GM12878 (cell line): ENCODE measurements at regions of chr5 and their contacts with region 1.

Region 1: DNA sequence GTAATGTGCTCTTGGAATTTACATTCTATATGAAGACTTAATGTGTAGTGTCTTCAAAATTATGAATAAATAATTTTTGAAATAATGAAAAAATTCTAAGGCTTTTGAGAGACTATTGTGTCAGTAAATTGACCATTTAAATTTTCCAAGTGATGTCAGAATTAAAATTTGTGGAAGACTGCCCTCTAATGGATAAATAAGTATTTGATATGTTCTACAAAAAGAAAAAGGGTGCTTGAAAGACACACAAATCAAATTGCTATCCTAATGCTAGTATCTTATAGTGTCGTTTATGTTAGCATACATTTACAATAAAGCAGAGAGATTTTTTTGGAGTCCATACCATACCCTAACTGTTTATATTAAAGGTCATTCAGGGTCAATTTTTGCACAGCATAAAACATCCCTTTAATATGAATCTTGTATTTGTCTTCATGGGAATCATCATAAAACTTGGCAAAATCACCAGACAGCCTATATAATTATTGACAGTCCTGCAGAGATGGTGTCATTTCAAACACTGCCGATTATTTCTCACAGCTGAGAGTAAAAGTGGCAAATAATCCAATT is 120.8 kb upstream of the SLC27A6 start:
- DNase-seq: no peak
- ATAC-seq: no peak
- H3K4me3 ChIP-seq: no peak overlapping the region
- H3K27ac ChIP-seq: no peak overlapping the region
- H3K4me1 ChIP-seq: no peaks in the 10 kb centered on the region
- H3K27me3 ChIP-seq: no peaks in the 10 kb centered on the region
- CTCF ChIP-seq: no peak; a peak in 1 of 6 replicates
- EP300 ChIP-seq: no peak
- POLR2A ChIP-seq: no peak
- RAD21 ChIP-seq: peak; percentile 21; the same call in 1 of the 2 replicates

Region 2: DNA sequence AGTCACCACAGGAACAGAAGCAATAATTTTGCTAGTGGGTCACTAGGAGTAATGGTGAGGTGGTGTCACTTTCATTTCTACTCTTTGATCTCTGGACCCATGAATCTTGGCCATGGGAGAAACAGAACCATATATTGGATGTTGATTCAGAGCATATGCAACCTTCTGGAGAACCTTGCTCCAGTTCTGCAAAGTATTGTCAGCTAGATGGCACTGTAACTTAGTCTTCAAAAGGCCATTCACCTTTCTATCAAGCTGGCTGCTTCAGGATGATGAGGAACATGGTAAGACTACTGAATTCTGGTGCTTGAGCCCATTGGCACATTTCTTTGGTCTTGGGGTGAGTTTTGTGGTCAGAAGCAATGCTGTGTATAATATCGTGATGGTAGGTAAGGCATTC is 177.3 kb before region 1 on chr5:
- CTCF ChIA-PET with region 1: interaction called, 7 read pairs
- POLR2A ChIA-PET with region 1: no interaction called
- RAD21 ChIA-PET with region 1: interaction called, 3 read pairs
- SMC1A ChIA-PET with region 1: interaction called, 3 read pairs
- in situ Hi-C with region 1: no loop called
- intact Hi-C with region 1: loop called (anchors 1 kb)
- DNase-seq: no peak
- ATAC-seq: no peak
- H3K4me3 ChIP-seq: no peak overlapping the region
- H3K27ac ChIP-seq: no peak overlapping the region
- H3K4me1 ChIP-seq: no peaks in the 10 kb centered on the region
- H3K27me3 ChIP-seq: no peaks in the 10 kb centered on the region
- CTCF ChIP-seq: peak in 2 of 3 experiments; percentile 22 to 28; a peak in 1 of 6 replicates
- EP300 ChIP-seq: no peak
- POLR2A ChIP-seq: no peak
- RAD21 ChIP-seq: peak; percentile 40

Region 3: GRCh38 chr5:129027260-129027659 is 182.8 kb after region 1 on chr5:
- CTCF ChIA-PET with region 1: no interaction called
- POLR2A ChIA-PET with region 1: no interaction called
- RAD21 ChIA-PET with region 1: no interaction called
- SMC1A ChIA-PET with region 1: no interaction called
- in situ Hi-C with region 1: no loop called
- intact Hi-C with region 1: no loop called
- DNase-seq: no peak
- ATAC-seq: no peak
- H3K4me3 ChIP-seq: no peak overlapping the region
- H3K27ac ChIP-seq: no peak overlapping the region
- H3K4me1 ChIP-seq: no peaks in the 10 kb centered on the region
- H3K27me3 ChIP-seq: no peaks in the 10 kb centered on the region
- CTCF ChIP-seq: no peak
- EP300 ChIP-seq: no peak
- POLR2A ChIP-seq: no peak
- RAD21 ChIP-seq: no peak